Gastrocnemius medialis (tissue), 4 donors: ENCODE measurements at regions of chr11 and their contacts with region 1.

Region 1: DNA sequence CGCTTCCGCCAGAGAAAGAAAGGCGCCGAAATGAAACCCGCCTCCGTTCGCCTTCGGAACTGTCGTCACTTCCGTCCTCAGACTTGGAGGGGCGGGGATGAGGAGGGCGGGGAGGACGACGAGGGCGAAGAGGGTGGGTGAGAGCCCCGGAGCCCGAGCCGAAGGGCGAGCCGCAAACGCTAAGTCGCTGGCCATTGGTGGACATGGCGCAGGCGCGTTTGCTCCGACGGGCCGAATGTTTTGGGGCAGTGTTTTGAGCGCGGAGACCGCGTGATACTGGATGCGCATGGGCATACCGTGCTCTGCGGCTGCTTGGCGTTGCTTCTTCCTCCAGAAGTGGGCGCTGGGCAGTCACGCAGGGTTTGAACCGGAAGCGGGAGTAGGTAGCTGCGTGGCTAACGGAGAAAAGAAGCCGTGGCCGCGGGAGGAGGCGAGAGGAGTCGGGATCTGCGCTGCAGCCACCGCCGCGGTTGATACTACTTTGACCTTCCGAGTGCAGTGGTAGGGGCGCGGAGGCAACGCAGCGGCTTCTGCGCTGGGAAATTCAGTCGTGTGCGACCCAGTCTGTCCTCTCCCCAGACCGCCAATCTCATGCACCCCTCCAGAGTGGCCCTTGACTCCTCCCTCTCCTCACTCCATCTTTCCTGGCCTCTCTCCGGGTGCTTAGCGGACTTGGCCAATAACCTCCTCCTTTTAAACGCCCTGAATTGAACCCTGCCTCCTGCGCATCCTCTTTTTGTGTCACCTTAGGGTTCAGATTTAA is at the start of gene ATM:
- DNase-seq: peak; percentile 99 to 100
- ATAC-seq: peak; percentile 91 to 92
- H3K4me3 ChIP-seq: peak within 1 kb of the TSS; percentile 59 to 92 (median 88)
- H3K27ac ChIP-seq: peak within 1 kb of the TSS; percentile 86 to 99 (median 96)
- H3K4me1 ChIP-seq: peaks cover 27 to 40% of the 10 kb centered on the region in 2 donors
- H3K27me3 ChIP-seq: no peaks in the 10 kb centered on the region
- CTCF ChIP-seq: peak; percentile 38 to 77 (median 56)
- POLR2A ChIP-seq: peak; percentile 6 to 33
- total RNA-seq, gene ATM: 9.3 to 21.6 (median 15.9) TPM

Region 2: DNA sequence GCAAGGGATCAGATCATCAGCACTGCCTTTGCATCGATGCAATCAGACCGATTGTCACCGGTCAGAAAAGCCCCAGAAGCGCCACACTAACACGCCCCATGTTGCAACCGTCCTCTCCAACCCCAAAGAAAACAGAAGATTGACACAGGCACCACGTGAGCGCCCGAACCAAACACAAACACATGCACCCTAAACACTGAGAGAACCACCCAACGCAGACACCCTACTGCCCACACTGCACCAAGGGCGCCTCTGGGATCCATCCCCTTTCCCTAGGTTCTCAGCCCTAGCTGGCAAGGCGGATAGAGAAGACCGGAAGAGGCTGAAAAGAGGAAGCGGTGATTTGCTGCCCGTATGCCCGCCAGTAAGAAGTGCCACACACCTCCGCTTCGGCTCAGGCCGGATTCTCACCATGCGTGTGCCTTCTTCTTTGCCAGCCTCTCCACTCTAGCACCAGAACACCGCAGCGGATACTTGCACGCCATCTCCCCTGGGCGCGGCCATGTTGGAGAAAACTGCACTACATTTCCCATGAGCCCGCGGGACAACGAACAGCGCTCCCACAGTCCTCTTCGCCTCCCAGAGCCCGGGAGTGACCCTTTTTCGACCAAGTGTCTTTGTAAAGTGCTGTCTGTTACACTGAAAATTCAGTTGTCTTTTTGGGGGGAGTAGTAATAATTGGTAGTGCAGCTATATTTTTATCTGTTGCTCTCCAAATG is 657.5 kb before region 1 on chr11 and contains the start of gene ALKBH8:
- in situ Hi-C with region 1: no loop called
- intact Hi-C with region 1: loop called (anchors 10 kb)
- DNase-seq: peak; percentile 59 to 68
- ATAC-seq: peak; percentile 95 to 98
- H3K4me3 ChIP-seq: peak within 1 kb of the TSS; percentile 73 to 92 (median 80)
- H3K27ac ChIP-seq: peak within 1 kb of the TSS; percentile 86 to 89 (median 88)
- H3K4me1 ChIP-seq: peaks cover 13 to 22% of the 10 kb centered on the region in 2 donors
- H3K27me3 ChIP-seq: no peaks in the 10 kb centered on the region
- CTCF ChIP-seq: no peak
- POLR2A ChIP-seq: no peak
- total RNA-seq, gene ALKBH8: 5.4 to 8.1 (median 6.6) TPM

Region 3: GRCh38 chr11:108008656-108009496 is 214.0 kb before region 1 on chr11 and contains the start of gene CUL5:
- in situ Hi-C with region 1: loop called in 1 of 4 experiments (anchors 10 kb)
- intact Hi-C with region 1: loop called (anchors 1 kb)
- DNase-seq: peak; percentile 83 to 90
- ATAC-seq: peak; percentile 90 to 92
- H3K4me3 ChIP-seq: peak within 1 kb of the TSS; percentile 94 to 97 (median 96)
- H3K27ac ChIP-seq: peak within 1 kb of the TSS; percentile 95 to 98 (median 96)
- H3K4me1 ChIP-seq: peaks cover 36 to 44% of the 10 kb centered on the region in 2 donors
- H3K27me3 ChIP-seq: no peaks in the 10 kb centered on the region
- CTCF ChIP-seq: peak; percentile 92 to 97 (median 94)
- POLR2A ChIP-seq: peak; percentile 56 to 62
- total RNA-seq, gene CUL5: 40.6 to 83.5 (median 66.5) TPM

Region 4: GRCh38 chr11:108467091-108467823 is 244.4 kb after region 1 on chr11 and contains the start of gene C11orf65:
- in situ Hi-C with region 1: loop called in 1 of 4 experiments (anchors 5 kb)
- intact Hi-C with region 1: loop called (anchors 2 kb)
- DNase-seq: peak; percentile 95 to 96
- ATAC-seq: peak; percentile 99 to 100
- H3K4me3 ChIP-seq: peak within 1 kb of the TSS; percentile 66 to 88 (median 79)
- H3K27ac ChIP-seq: peak within 1 kb of the TSS; percentile 92 to 98 (median 96)
- H3K4me1 ChIP-seq: peaks cover 3 to 8% of the 10 kb centered on the region in 2 donors
- H3K27me3 ChIP-seq: no peaks in the 10 kb centered on the region
- CTCF ChIP-seq: no peak
- POLR2A ChIP-seq: peak; percentile 88 to 94
- total RNA-seq, gene C11orf65: 0.51 TPM in 1 of 4 donors, not detected in the others